ENCODE measurements at regions of chr5 and their contacts with region 1.

Region 1: DNA sequence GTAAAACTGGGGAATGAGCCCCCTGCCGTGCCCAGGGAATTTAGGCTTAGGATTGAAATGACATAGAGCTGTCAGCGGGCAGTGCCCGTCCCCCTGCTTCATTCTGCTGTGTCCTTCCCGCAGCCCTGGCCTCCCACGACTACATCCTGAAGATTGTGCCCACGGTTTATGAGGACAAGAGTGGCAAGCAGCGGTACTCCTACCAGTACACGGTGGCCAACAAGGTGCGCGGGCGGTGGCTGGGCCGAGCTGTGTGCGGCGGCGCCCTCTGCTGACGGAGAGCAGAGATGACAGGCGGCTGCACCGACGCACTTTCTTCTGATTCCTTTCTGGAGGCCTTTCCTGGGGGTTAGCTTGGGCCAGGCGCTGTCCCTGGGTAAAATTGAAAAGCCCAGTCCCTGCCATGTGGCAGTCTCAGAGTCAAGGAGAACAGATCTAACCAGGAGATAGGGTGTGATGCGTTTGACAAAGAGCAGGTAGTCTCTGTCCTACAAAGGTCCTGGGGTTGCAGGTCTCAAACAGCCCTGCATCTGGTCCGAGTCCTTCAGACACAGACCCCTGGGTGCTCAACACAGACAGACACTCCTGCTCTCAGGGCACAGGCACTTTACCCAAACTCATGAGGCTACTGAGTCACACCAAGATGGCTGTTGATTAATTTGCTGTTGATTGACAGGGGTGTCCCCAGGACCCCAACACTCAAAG is 26.8 kb upstream of the RPL26L1 start:
- DNase-seq: peak; percentile 80
- ATAC-seq: peak; percentile 95
- H3K4me3 ChIP-seq: no peak overlapping the region
- H3K4me3 Mint-ChIP-seq: no peak overlapping the region
- H3K27ac ChIP-seq: no peak overlapping the region
- H3K27ac Mint-ChIP-seq: peak overlapping the region; percentile 78
- H3K4me1 ChIP-seq: peaks cover 0 to 6% of the 10 kb centered on the region in 2 donors
- H3K4me1 Mint-ChIP-seq: peaks cover 16% of the 10 kb centered on the region
- H3K27me3 ChIP-seq: no peaks in the 10 kb centered on the region
- H3K27me3 Mint-ChIP-seq: no peaks in the 10 kb centered on the region
- CTCF ChIP-seq: peak; percentile 96

Region 2: DNA sequence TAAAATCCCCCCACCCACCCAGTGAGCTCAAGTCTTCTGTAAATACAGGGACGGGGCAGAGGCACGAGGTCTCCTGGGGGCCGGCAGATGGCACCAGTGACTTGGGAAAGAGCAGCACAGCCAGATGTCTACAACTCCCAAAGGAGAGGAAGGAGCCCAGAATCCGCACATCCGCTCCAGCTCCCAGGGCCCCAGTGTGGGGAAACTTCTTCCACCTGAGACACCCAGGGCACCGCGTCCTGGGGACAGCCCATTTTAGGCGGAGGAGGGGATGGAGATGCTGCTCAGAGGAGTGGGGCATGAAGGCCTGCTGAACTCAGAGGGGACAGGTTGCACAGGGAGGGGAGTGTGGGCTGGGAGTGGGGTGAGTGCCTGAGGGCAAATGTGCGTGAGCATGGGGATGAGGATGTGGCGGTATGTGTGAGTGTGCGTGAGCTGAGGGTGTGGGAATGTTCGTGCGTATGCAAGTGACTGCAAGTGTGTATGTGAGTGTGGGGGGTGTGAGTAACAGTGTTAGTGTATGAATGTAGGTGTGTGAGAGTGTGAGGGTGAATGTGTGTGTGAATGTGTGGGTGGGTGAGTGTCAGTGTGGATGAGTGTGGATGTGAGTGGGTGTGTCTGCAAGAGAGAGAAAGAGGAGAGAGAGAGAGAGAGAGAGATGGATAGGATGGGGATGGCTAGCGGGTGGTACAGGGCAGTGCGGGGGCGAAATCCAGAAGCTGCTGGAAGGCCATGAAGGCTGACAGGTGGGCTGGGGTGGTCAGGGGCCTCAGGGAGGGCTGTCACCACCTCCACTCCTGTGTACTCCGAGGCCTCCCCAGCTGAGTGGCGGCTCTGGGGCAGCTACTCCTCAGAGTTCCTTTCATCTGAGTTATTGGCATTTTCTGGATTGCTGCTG is 224.9 kb before region 1 on chr5:
- CTCF ChIA-PET with region 1: interaction called, 368 read pairs
- POLR2A ChIA-PET with region 1: no interaction called
- intact Hi-C with region 1: no loop called
- DNase-seq: peak; percentile 31
- ATAC-seq: peak; percentile 24
- H3K4me3 ChIP-seq: no peak overlapping the region
- H3K4me3 Mint-ChIP-seq: no peak overlapping the region
- H3K27ac ChIP-seq: no peak overlapping the region
- H3K27ac Mint-ChIP-seq: no peak overlapping the region
- H3K4me1 ChIP-seq: no peaks in the 10 kb centered on the region
- H3K4me1 Mint-ChIP-seq: no peaks in the 10 kb centered on the region
- H3K27me3 ChIP-seq: peaks cover 0 to 28% (median 11%) of the 10 kb centered on the region in 4 experiments
- H3K27me3 Mint-ChIP-seq: peaks cover 66% of the 10 kb centered on the region
- CTCF ChIP-seq: no peak

Region 3: GRCh38 chr5:172764849-172765765 is 167.4 kb before region 1 on chr5:
- CTCF ChIA-PET with region 1: interaction called, 90 read pairs
- POLR2A ChIA-PET with region 1: interaction called, 4 read pairs
- intact Hi-C with region 1: loop called (anchors 1 kb)
- DNase-seq: peak; percentile 99
- ATAC-seq: peak; percentile 78
- H3K4me3 ChIP-seq: peak overlapping the region; percentile 27 to 74 (median 52)
- H3K4me3 Mint-ChIP-seq: peak overlapping the region; percentile 83
- H3K27ac ChIP-seq: peak overlapping the region; percentile 92 to 94
- H3K27ac Mint-ChIP-seq: peak overlapping the region; percentile 94
- H3K4me1 ChIP-seq: peaks cover 33 to 42% of the 10 kb centered on the region in 2 donors
- H3K4me1 Mint-ChIP-seq: peaks cover 59% of the 10 kb centered on the region
- H3K27me3 ChIP-seq: no peaks in the 10 kb centered on the region
- H3K27me3 Mint-ChIP-seq: no peaks in the 10 kb centered on the region
- CTCF ChIP-seq: no peak

Region 4: GRCh38 chr5:172849606-172850453 is 82.6 kb before region 1 on chr5:
- CTCF ChIA-PET with region 1: interaction called, 21 read pairs
- POLR2A ChIA-PET with region 1: no interaction called
- intact Hi-C with region 1: no loop called
- DNase-seq: peak; percentile 93
- ATAC-seq: peak; percentile 84
- H3K4me3 ChIP-seq: peak overlapping the region in 4 of 5 experiments; percentile 11 to 40 (median 20)
- H3K4me3 Mint-ChIP-seq: peak overlapping the region; percentile 73
- H3K27ac ChIP-seq: peak overlapping the region; percentile 88 to 95
- H3K27ac Mint-ChIP-seq: peak overlapping the region; percentile 95
- H3K4me1 ChIP-seq: peaks cover 61 to 74% of the 10 kb centered on the region in 2 donors
- H3K4me1 Mint-ChIP-seq: peaks cover 80% of the 10 kb centered on the region
- H3K27me3 ChIP-seq: no peaks in the 10 kb centered on the region
- H3K27me3 Mint-ChIP-seq: no peaks in the 10 kb centered on the region
- CTCF ChIP-seq: no peak

Region 5: DNA sequence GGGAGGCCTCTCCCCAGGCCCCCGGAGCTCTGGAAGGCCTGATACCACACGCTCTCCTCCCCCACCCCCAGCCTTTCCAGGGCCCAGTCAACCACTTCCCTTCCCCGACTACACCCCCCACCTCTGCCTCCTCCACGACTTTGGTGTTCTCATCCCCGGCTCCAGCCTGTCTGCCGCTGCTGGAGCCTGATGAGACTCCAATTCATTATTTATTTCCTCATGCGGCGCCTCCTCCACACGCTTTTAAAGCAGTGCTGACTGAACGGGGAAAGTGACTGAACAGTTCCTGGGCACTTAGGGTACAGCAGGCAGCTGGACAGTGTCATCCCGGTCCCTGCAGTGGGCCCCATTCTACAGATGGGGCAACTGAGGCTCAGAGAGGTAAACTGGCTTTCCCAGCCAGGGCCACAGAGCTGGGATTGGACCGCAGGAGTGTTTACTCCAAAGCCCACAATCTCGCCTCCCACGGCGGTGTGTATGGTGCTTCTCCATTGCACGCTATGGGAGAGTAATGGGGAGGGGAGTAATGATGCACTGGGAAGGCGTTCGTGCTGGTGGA is 10.9 kb after region 1 on chr5:
- CTCF ChIA-PET with region 1: interaction called, 12 read pairs
- POLR2A ChIA-PET with region 1: no interaction called
- intact Hi-C with region 1: no loop called
- DNase-seq: no peak
- ATAC-seq: no peak
- H3K4me3 ChIP-seq: no peak overlapping the region
- H3K4me3 Mint-ChIP-seq: no peak overlapping the region
- H3K27ac ChIP-seq: no peak overlapping the region
- H3K27ac Mint-ChIP-seq: no peak overlapping the region
- H3K4me1 ChIP-seq: no peaks in the 10 kb centered on the region
- H3K4me1 Mint-ChIP-seq: no peaks in the 10 kb centered on the region
- H3K27me3 ChIP-seq: no peaks in the 10 kb centered on the region
- H3K27me3 Mint-ChIP-seq: no peaks in the 10 kb centered on the region
- CTCF ChIP-seq: no peak

Region 6: DNA sequence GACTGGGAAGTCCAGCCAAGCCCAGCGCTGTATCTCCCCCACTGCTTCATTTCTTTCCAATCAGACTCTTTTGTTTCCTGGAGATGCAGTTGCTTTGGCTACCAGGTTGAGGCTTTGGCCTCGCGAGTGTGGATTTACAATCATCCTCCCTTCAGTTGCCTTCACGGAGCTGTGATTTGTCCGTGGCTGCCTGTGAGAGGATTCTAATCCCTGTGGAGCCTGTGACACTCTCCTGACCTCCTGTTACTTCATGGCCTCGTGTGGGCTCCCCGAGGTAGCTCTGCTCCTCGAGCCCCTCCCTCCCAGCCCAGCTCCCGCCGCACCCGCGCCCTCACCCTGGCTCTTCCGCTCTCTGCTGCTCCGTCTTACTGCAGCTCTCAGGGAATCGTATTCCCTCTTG is 503.0 kb after region 1 on chr5:
- CTCF ChIA-PET with region 1: no interaction called
- POLR2A ChIA-PET with region 1: no interaction called
- intact Hi-C with region 1: no loop called
- DNase-seq: no peak
- ATAC-seq: no peak
- H3K4me3 ChIP-seq: no peak overlapping the region
- H3K4me3 Mint-ChIP-seq: no peak overlapping the region
- H3K27ac ChIP-seq: no peak overlapping the region
- H3K27ac Mint-ChIP-seq: no peak overlapping the region
- H3K4me1 ChIP-seq: no peaks in the 10 kb centered on the region
- H3K4me1 Mint-ChIP-seq: no peaks in the 10 kb centered on the region
- H3K27me3 ChIP-seq: no peaks in the 10 kb centered on the region
- H3K27me3 Mint-ChIP-seq: peaks cover 18% of the 10 kb centered on the region
- CTCF ChIP-seq: no peak